Caco-2 (cell line): ENCODE measurements at regions of chr22 and their contacts with region 1.

Region 1: GRCh38 chr22:39997939-39998338 is 3.2 kb downstream of the FAM83F start:
- DNase-seq: peak; percentile 60 to 62
- H3K4me3 ChIP-seq: no peak overlapping the region
- H3K4me3 Mint-ChIP-seq: peak overlapping the region; percentile 64
- H3K27ac Mint-ChIP-seq: peak overlapping the region; percentile 93
- H3K4me1 ChIP-seq: peaks cover 75% of the 10 kb centered on the region
- H3K4me1 Mint-ChIP-seq: peaks cover 41% of the 10 kb centered on the region
- H3K27me3 ChIP-seq: no peaks in the 10 kb centered on the region
- H3K27me3 Mint-ChIP-seq: no peaks in the 10 kb centered on the region
- CTCF ChIP-seq: no peak

Region 2: GRCh38 chr22:39932918-39933649 is 64.9 kb before region 1 on chr22:
- CTCF ChIA-PET with region 1: interaction called, 3 read pairs
- POLR2A ChIA-PET with region 1: no interaction called
- intact Hi-C with region 1: loop called (anchors 2 kb)
- DNase-seq: peak; percentile 37 to 53
- H3K4me3 ChIP-seq: no peak overlapping the region
- H3K4me3 Mint-ChIP-seq: no peak overlapping the region
- H3K27ac Mint-ChIP-seq: no peak overlapping the region
- H3K4me1 ChIP-seq: no peaks in the 10 kb centered on the region
- H3K4me1 Mint-ChIP-seq: no peaks in the 10 kb centered on the region
- H3K27me3 ChIP-seq: no peaks in the 10 kb centered on the region
- H3K27me3 Mint-ChIP-seq: peaks cover 23% of the 10 kb centered on the region
- CTCF ChIP-seq: peak; percentile 64

Region 3: DNA sequence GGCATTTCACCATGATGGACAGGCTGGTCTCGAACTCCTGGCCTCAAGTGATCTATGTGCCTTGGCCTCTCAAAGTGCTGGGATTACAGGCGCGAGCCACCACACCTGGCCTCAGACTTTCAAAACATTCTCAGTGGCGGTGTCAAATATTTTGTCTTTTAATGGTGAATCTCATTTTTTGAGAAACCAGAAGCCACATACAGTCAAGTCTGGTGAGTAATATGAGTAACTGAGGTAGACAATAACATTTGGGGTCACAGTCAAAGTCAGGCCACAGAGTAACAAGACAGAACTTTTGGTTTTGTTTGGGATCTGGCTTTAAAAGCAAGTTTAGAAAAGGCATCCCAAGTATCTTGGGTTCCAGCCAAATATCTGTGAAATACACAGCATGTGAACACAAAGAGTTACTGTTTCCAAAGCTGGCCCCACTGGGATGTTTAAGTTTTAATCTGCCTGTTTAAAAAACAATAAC is 43.3 kb before region 1 on chr22:
- CTCF ChIA-PET with region 1: interaction called, 6 read pairs
- POLR2A ChIA-PET with region 1: no interaction called
- intact Hi-C with region 1: loop called (anchors 5 kb)
- DNase-seq: no peak
- H3K4me3 ChIP-seq: no peak overlapping the region
- H3K4me3 Mint-ChIP-seq: no peak overlapping the region
- H3K27ac Mint-ChIP-seq: no peak overlapping the region
- H3K4me1 ChIP-seq: no peaks in the 10 kb centered on the region
- H3K4me1 Mint-ChIP-seq: no peaks in the 10 kb centered on the region
- H3K27me3 ChIP-seq: no peaks in the 10 kb centered on the region
- H3K27me3 Mint-ChIP-seq: peaks cover 3% of the 10 kb centered on the region
- CTCF ChIP-seq: no peak

Region 4: GRCh38 chr22:40014667-40015248 is 16.8 kb after region 1 on chr22:
- CTCF ChIA-PET with region 1: interaction called, 4 read pairs
- POLR2A ChIA-PET with region 1: interaction called, 4 read pairs
- intact Hi-C with region 1: loop called (anchors 1 kb)
- DNase-seq: peak; percentile 47 to 60
- H3K4me3 ChIP-seq: no peak overlapping the region
- H3K4me3 Mint-ChIP-seq: peak overlapping the region; percentile 25
- H3K27ac Mint-ChIP-seq: peak overlapping the region; percentile 77
- H3K4me1 ChIP-seq: peaks cover 74% of the 10 kb centered on the region
- H3K4me1 Mint-ChIP-seq: peaks cover 32% of the 10 kb centered on the region
- H3K27me3 ChIP-seq: no peaks in the 10 kb centered on the region
- H3K27me3 Mint-ChIP-seq: no peaks in the 10 kb centered on the region
- CTCF ChIP-seq: no peak